Prostate gland (tissue), 2 donors: ENCODE measurements at regions of chr19 and their contacts with region 1.

Region 1: DNA sequence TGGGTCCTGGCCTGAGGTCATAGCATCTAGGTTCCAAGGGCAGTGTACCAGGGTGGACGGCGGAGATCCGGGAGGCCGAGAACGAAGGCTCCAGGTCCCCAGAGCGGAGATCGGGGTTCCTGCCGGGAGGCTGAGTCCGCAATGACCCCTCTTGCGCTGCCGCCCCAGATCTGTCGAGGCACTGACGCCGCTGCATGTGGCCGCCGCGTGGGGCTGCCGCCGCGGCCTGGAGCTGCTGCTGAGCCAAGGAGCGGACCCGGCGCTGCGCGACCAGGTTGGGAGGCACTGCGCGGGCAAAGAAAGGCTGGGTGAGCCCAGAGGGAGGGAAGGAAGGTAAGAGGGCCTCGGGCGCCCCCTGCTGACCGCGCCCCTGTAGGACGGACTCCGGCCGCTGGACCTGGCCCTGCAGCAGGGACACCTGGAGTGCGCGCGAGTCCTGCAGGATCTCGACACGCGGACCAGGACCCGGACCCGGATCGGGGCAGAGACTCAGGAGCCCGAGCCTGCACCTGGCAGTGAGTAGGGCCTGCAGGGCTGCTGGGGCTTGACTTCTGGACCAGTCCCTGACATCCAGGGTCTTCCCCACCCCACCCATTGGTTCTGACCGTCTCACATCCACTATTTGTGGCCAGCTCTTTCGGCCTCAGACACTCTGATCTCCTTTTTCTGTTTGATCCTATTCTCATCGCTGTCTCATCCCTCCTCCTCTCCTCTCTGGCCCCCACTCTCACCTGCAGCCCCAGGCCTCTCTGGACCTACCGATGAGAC is 971 bp downstream of the ANKLE1 start:
- DNase-seq: peak; percentile 79
- H3K4me3 ChIP-seq: peak overlapping the region in 1 of 2 donors; percentile 12
- H3K27ac ChIP-seq: no peak overlapping the region
- H3K4me1 ChIP-seq: peaks cover 6% of the 10 kb centered on the region
- H3K27me3 ChIP-seq: no peaks in the 10 kb centered on the region
- CTCF ChIP-seq: peak; percentile 91 to 95 (median 92)
- POLR2A ChIP-seq: no peak

Region 2: GRCh38 chr19:17069218-17069617 is 213.5 kb before region 1 on chr19:
- intact Hi-C with region 1: loop called (anchors 5 kb)
- DNase-seq: no peak
- H3K4me3 ChIP-seq: no peak overlapping the region
- H3K27ac ChIP-seq: no peak overlapping the region
- H3K4me1 ChIP-seq: peaks cover 2% of the 10 kb centered on the region
- H3K27me3 ChIP-seq: no peaks in the 10 kb centered on the region
- CTCF ChIP-seq: no peak
- POLR2A ChIP-seq: no peak

Region 3: GRCh38 chr19:17135001-17135853 is 147.4 kb before region 1 on chr19:
- intact Hi-C with region 1: no loop called
- DNase-seq: peak; percentile 87
- H3K4me3 ChIP-seq: no peak overlapping the region
- H3K27ac ChIP-seq: peak overlapping the region; percentile 82 to 89
- H3K4me1 ChIP-seq: peaks cover 14% of the 10 kb centered on the region
- H3K27me3 ChIP-seq: no peaks in the 10 kb centered on the region
- CTCF ChIP-seq: peak in 3 of 4 experiments; percentile 10 to 54 (median 36)
- POLR2A ChIP-seq: peak; percentile 34

Region 4: GRCh38 chr19:17205237-17206140 is 77.2 kb before region 1 on chr19:
- intact Hi-C with region 1: loop called (anchors 5 kb)
- DNase-seq: peak; percentile 46
- H3K4me3 ChIP-seq: no peak overlapping the region
- H3K27ac ChIP-seq: no peak overlapping the region
- H3K4me1 ChIP-seq: no peaks in the 10 kb centered on the region
- H3K27me3 ChIP-seq: no peaks in the 10 kb centered on the region
- CTCF ChIP-seq: peak in 3 of 4 experiments; percentile 45 to 72 (median 71)
- POLR2A ChIP-seq: no peak

Region 5: GRCh38 chr19:17245244-17245984 is 37.3 kb before region 1 on chr19 and contains the start of gene NR2F6:
- intact Hi-C with region 1: no loop called
- DNase-seq: peak; percentile 54
- H3K4me3 ChIP-seq: peak within 1 kb of the TSS; percentile 53 to 87
- H3K27ac ChIP-seq: peak within 1 kb of the TSS; percentile 79 to 80
- H3K4me1 ChIP-seq: no peaks in the 10 kb centered on the region
- H3K27me3 ChIP-seq: no peaks in the 10 kb centered on the region
- CTCF ChIP-seq: no peak
- POLR2A ChIP-seq: peak; percentile 26
- total RNA-seq, gene NR2F6: 91.7 to 108 TPM

Region 6: GRCh38 chr19:17323964-17324332 is 41.3 kb after region 1 on chr19:
- intact Hi-C with region 1: no loop called
- DNase-seq: no peak
- H3K4me3 ChIP-seq: no peak overlapping the region
- H3K27ac ChIP-seq: no peak overlapping the region
- H3K4me1 ChIP-seq: peaks cover 9% of the 10 kb centered on the region
- H3K27me3 ChIP-seq: no peaks in the 10 kb centered on the region
- CTCF ChIP-seq: no peak
- POLR2A ChIP-seq: no peak

Region 7: DNA sequence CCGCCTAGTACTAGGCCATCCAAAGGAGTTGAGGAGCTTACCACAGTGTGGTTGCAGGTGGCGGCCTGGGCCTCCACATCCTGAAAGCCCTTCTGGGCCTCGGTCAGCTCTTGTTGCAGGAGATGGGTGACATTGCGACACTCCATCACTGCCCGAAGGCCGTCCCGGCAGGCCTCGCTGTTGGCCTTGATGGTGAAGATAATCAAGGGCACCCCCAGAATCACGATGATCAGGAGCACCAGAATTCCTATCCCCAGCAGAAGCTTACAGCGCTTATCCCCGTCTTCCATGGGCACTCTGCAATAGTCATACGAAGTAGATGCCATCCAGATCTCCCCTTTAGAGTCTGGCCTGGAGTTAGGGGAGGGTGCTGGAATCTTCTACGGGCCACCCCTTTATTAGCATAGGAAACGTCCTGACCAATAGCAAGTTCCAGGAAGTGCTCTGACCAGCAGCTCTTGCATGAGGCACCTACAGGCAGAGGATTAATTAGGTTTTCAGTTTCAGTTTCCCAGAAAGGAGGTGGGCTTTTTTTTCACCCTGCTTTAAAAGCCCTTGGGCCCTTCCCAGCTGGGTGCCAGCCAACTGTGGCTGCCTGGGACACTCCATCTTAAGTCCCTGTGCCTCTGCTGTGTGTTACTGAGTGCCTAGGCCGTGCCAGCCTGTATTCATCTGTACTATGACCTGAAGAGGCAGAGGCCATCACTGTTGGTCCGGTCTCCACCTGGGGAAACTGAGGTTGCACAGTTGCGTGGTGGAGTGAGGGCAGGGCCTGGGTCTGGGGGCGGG is 122.8 kb after region 1 on chr19 and contains the start of gene BST2:
- intact Hi-C with region 1: no loop called
- DNase-seq: peak; percentile 40
- H3K4me3 ChIP-seq: peak within 1 kb of the TSS; percentile 23 to 26
- H3K27ac ChIP-seq: peak within 1 kb of the TSS; percentile 72 to 75
- H3K4me1 ChIP-seq: no peaks in the 10 kb centered on the region
- H3K27me3 ChIP-seq: no peaks in the 10 kb centered on the region
- CTCF ChIP-seq: no peak
- POLR2A ChIP-seq: peak; percentile 39
- total RNA-seq, gene BST2: 32.7 to 75.3 TPM